ENCODE measurements at regions of chr12 and their contacts with region 1.

Region 1: DNA sequence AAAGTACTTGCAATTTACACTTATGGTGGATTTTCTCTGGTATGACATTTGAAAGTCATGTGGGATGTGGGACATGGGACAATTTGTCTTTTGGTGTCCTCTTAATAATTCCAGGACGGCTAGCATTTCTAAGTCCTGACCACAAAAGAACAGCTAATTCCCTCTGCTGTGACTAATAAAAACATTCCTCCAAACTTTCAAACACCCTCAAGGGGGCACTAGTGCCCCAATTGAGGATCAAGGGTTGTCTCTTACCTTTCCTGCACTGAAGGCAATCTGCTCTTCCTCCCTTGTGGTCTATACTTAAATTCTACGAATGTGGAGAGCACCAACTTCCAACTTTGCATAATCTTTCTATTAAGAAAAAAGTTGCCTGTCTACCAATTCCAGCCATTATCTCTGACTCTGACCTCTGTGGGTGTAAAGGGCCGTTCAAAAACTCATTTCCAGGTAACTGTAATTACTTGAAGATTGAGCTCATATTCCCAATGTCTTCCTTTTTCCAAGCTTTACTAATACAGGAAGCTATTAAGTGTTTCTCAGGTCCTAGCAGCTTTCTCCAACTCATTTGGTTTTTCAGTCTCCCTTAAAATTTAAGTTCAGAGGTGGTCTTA is 210.2 kb downstream of the PTPRO start:
- DNase-seq: peak in 4 of 5 donors; percentile 60 to 67 (median 64)
- H3K4me3 ChIP-seq: no peak overlapping the region
- H3K4me3 Mint-ChIP-seq: peak overlapping the region in 3 of 8 donors; percentile 49 to 75 (median 61)
- H3K27ac ChIP-seq: no peak overlapping the region
- H3K27ac Mint-ChIP-seq: peak overlapping the region in 3 of 7 donors; percentile 39 to 74 (median 60)
- H3K4me1 ChIP-seq: peaks cover 36% of the 10 kb centered on the region
- H3K4me1 Mint-ChIP-seq: peaks cover 8 to 14% (median 11%) of the 10 kb centered on the region in 4 donors
- H3K27me3 ChIP-seq: no peaks in the 10 kb centered on the region
- H3K27me3 Mint-ChIP-seq: no peaks in the 10 kb centered on the region

Region 2: DNA sequence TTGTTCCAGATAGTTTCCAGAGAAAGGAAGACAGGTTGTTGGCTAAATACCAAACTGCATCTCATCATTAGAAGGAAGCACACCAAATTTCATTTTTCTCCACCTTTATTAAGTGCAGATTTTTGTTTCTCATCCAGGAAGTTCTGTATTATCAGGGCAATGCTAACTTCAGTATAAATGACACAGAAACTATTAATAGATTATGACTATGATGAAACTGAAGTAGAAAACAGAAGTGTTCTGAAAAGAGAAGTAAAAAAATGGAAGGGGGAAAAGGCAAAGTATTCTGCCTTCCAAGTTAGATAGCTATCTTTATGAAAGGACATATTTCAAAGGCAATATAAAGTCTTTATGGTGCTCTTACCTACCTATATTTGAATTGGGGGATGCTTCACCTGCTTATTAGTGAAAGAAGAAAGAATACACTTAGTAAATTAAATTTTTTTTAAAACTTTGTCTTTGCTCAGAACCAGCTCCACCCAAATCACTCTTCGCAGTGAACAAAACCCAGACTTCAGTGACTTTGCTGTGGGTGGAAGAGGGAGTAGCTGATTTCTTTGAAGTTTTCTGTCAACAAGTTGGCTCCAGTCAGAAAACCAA is 13.7 kb after region 1 on chr12:
- CTCF ChIA-PET with region 1: interaction called, 104 read pairs
- POLR2A ChIA-PET with region 1: interaction called, 56 read pairs
- intact Hi-C with region 1: loop called (anchors 1 kb)
- DNase-seq: peak; percentile 65 to 74 (median 68)
- H3K4me3 ChIP-seq: no peak overlapping the region
- H3K4me3 Mint-ChIP-seq: peak overlapping the region; percentile 22 to 80 (median 59)
- H3K27ac ChIP-seq: peak overlapping the region; percentile 30
- H3K27ac Mint-ChIP-seq: peak overlapping the region; percentile 85 to 98 (median 88)
- H3K4me1 ChIP-seq: peaks cover 50% of the 10 kb centered on the region
- H3K4me1 Mint-ChIP-seq: peaks cover 35 to 62% (median 42%) of the 10 kb centered on the region in 4 donors
- H3K27me3 ChIP-seq: no peaks in the 10 kb centered on the region
- H3K27me3 Mint-ChIP-seq: no peaks in the 10 kb centered on the region

Region 3: DNA sequence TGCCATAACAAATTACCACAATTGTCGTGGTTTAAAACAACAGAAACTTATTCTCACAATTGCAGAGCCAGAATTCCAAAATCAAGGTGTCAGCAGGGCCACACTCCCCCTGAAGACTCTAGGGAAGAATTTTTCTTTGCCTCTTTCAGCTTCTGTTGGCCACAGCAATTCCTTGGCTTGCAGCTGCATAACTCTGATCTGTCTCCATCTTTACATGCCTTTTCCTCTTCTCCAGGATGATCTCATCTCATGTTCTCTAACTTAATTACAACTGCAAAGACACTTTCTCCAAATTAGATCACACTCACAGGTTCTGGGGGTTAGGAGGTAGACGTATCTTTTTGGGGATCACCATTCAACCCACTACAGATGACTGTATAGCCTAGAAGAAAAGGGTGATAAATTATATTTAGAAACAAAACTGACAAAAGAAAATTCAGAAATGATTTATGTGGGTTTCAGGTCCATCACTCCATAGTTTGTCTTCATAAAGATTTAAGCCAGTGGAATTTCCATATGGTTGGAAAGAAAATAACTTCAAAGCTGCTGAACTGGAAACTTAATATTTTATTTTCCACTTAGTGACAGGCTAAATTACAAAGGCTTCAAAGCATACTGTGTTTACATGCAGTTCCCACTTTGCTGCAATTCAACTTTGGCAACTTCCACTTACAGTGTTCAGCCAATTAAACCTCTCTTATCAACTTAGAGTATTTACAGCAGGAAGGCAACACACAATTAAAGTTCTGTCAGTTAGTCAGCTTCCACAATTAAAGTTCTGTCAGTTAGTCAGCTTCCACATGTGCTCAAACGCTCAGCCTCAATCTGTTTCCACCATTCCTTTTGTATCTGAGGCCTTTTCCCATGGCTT is 43.4 kb after region 1 on chr12:
- CTCF ChIA-PET with region 1: interaction called, 394 read pairs
- POLR2A ChIA-PET with region 1: interaction called, 78 read pairs
- intact Hi-C with region 1: loop called (anchors 1 kb)
- DNase-seq: no peak
- H3K4me3 ChIP-seq: no peak overlapping the region
- H3K4me3 Mint-ChIP-seq: peak overlapping the region in 2 of 8 donors; percentile 2 to 27
- H3K27ac ChIP-seq: no peak overlapping the region
- H3K27ac Mint-ChIP-seq: peak overlapping the region in 1 of 7 donors; percentile 30
- H3K4me1 ChIP-seq: peaks cover 9% of the 10 kb centered on the region
- H3K4me1 Mint-ChIP-seq: peaks cover 7 to 14% (median 12%) of the 10 kb centered on the region in 4 donors
- H3K27me3 ChIP-seq: no peaks in the 10 kb centered on the region
- H3K27me3 Mint-ChIP-seq: no peaks in the 10 kb centered on the region

Region 4: GRCh38 chr12:15590180-15590826 is 57.8 kb after region 1 on chr12:
- CTCF ChIA-PET with region 1: interaction called, 394 read pairs
- POLR2A ChIA-PET with region 1: interaction called, 78 read pairs
- intact Hi-C with region 1: no loop called
- DNase-seq: peak; percentile 53 to 66 (median 63)
- H3K4me3 ChIP-seq: no peak overlapping the region
- H3K4me3 Mint-ChIP-seq: peak overlapping the region; percentile 68 to 88 (median 80)
- H3K27ac ChIP-seq: no peak overlapping the region
- H3K27ac Mint-ChIP-seq: peak overlapping the region in 6 of 7 donors; percentile 28 to 90 (median 40)
- H3K4me1 ChIP-seq: peaks cover 9% of the 10 kb centered on the region
- H3K4me1 Mint-ChIP-seq: peaks cover 3 to 10% (median 8%) of the 10 kb centered on the region in 4 donors
- H3K27me3 ChIP-seq: no peaks in the 10 kb centered on the region
- H3K27me3 Mint-ChIP-seq: peaks cover 3 to 5% of the 10 kb centered on the region in 2 donors

Region 5: GRCh38 chr12:15856097-15856982 is 323.9 kb after region 1 on chr12:
- CTCF ChIA-PET with region 1: interaction called, 7 read pairs
- POLR2A ChIA-PET with region 1: no interaction called
- intact Hi-C with region 1: loop called (anchors 1 kb)
- DNase-seq: peak; percentile 56 to 62 (median 59)
- H3K4me3 ChIP-seq: no peak overlapping the region
- H3K4me3 Mint-ChIP-seq: no peak overlapping the region
- H3K27ac ChIP-seq: no peak overlapping the region
- H3K27ac Mint-ChIP-seq: no peak overlapping the region
- H3K4me1 ChIP-seq: no peaks in the 10 kb centered on the region
- H3K4me1 Mint-ChIP-seq: no peaks in the 10 kb centered on the region
- H3K27me3 ChIP-seq: peaks cover 1% of the 10 kb centered on the region
- H3K27me3 Mint-ChIP-seq: peaks cover 7 to 17% of the 10 kb centered on the region in 2 donors

Measured in CD4-positive, alpha-beta memory T cell (primary cell).